Heart left ventricle (tissue), 16 donors: ENCODE measurements at regions of chr4 and their contacts with region 1.

Region 1: DNA sequence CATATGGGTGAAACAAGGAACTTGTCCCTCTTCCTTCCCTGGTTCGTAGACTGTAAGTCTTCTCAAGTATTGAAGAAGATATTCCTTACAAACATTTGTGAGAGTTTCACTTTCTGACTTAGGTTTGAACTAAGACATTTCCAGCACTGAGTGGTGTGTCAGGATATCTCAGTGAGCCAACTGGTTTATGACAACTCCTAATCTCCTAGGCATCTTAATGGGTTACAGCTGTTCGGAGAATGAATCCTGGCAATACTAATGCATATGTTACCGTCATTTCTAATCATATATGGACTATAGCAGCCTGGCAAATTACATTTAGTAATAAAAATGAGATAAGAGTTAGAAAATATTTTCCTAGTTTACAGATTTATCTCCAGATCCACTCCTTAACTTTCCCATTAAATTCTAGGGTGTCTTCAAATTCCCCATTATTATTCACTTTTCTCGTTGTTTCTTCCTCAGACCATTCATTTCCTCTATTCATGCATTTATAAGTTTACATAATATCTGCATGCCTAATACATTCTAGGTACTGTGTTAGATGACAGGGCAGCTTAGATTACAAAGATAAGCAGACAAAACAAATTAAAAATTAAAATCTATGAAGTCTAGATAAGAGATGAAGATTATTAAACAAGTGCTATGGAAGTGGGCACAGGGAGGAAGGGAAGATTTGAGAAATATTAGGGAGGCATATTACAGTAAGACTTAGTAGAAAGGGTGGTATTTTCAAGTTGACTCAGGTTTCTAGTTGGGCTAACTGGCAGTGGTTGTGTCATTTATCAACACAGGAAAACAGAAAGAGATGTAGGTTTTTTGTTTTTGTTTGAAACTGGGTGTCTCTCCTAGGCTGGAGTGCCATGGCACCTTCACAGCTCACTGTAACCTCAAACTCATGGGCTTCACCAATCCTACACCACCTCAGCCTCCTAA is 173.9 kb downstream of the WDFY3 start:
- DNase-seq: no peak
- ATAC-seq: no peak
- H3K4me3 ChIP-seq: no peak overlapping the region
- H3K27ac ChIP-seq: no peak overlapping the region
- H3K4me1 ChIP-seq: no peaks in the 10 kb centered on the region
- H3K27me3 ChIP-seq: no peaks in the 10 kb centered on the region
- CTCF ChIP-seq: no peak
- POLR2A ChIP-seq: no peak

Region 2: GRCh38 chr4:84740057-84740456 is 52.6 kb before region 1 on chr4:
- intact Hi-C with region 1: loop called in 1 of 10 experiments (anchors 10 kb)
- DNase-seq: no peak
- ATAC-seq: no peak
- H3K4me3 ChIP-seq: no peak overlapping the region
- H3K27ac ChIP-seq: no peak overlapping the region
- H3K4me1 ChIP-seq: no peaks in the 10 kb centered on the region
- H3K27me3 ChIP-seq: no peaks in the 10 kb centered on the region
- CTCF ChIP-seq: no peak
- POLR2A ChIP-seq: no peak

Region 3: DNA sequence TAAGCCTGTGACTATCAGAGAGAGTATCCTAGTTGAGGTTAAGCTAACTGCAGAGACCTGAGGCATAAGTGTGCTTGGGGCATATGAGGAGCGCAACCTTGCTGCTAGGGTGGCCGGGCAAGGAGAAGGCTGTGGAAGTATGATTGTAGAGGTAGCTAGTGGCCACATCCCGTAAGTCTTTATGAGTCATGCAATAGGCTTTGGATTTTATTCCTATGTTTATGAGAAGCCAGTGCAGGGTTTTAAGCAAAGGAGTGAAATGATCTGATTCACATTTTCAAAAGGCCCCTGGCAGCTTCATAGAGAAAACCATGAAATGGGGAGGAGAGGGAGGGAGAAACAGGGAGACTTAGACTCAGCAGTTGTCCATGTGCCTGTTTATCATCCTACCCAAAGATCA is 265.9 kb after region 1 on chr4:
- intact Hi-C with region 1: no loop called
- DNase-seq: no peak
- ATAC-seq: no peak
- H3K4me3 ChIP-seq: no peak overlapping the region
- H3K27ac ChIP-seq: no peak overlapping the region
- H3K4me1 ChIP-seq: no peaks in the 10 kb centered on the region
- H3K27me3 ChIP-seq: no peaks in the 10 kb centered on the region
- CTCF ChIP-seq: no peak
- POLR2A ChIP-seq: no peak

Region 4: GRCh38 chr4:85445050-85445639 is 652.5 kb after region 1 on chr4:
- intact Hi-C with region 1: no loop called
- DNase-seq: no peak
- ATAC-seq: no peak
- H3K4me3 ChIP-seq: no peak overlapping the region
- H3K27ac ChIP-seq: peak overlapping the region in 4 of 12 donors; percentile 7 to 22 (median 18)
- H3K4me1 ChIP-seq: peaks cover 0 to 10% (median 0%) of the 10 kb centered on the region in 12 donors
- H3K27me3 ChIP-seq: no peaks in the 10 kb centered on the region
- CTCF ChIP-seq: no peak
- POLR2A ChIP-seq: no peak